Endothelial cell of umbilical vein (primary cell): ENCODE measurements at regions of chr4 and their contacts with region 1.

Region 1: DNA sequence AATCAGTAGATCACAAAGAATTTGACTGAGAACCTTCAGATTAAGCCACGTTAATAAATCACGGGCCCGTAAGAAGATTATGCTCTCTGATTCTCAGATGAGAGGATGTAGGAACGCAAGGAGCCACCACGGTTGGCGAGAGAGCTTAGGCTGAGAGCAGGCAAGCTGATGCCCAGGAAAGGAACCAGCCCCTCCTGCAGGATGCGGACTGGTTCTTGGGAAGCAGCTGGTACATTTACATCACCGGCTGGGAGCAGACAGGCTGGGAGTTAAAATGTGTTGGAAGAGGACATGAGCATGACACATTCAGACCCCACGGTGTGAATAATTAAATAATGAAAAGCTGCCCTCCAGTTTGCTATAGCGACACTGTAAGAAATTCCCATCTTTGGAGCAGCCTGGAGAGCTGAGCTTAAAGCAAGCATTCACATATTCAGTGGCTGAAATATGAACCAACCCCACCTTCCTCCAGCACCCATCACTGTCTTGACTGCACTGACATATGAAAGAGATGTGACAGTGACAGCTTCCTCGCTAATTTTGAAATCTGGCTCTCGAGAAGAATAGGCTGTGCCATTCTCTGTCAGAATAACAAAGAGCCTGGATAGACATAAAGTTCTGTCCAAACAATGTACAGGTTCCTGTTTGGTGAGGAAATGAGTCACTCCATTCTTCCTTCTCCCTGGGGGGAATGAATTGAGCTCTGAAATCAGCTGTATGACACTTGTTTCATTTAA is 33.1 kb downstream of the LNX1 start:
- DNase-seq: peak; percentile 88
- H3K4me3 ChIP-seq: peak overlapping the region in 1 of 3 experiments; percentile 44
- H3K27ac ChIP-seq: peak overlapping the region; percentile 95
- H3K4me1 ChIP-seq: peaks cover 36% of the 10 kb centered on the region
- H3K27me3 ChIP-seq: no peaks in the 10 kb centered on the region
- CTCF ChIP-seq: peak in 1 of 2 donors; percentile 4
- POLR2A ChIP-seq: peak; percentile 39

Region 2: GRCh38 chr4:52712172-52712990 is 845.9 kb before region 1 on chr4:
- CTCF ChIA-PET with region 1: no interaction called
- POLR2A ChIA-PET with region 1: no interaction called
- dilution Hi-C with region 1: no loop called
- intact Hi-C with region 1: loop called (anchors 10 kb)
- DNase-seq: peak; percentile 97
- H3K4me3 ChIP-seq: peak overlapping the region; percentile 61 to 86 (median 76)
- H3K27ac ChIP-seq: peak overlapping the region; percentile 73
- H3K4me1 ChIP-seq: peaks cover 30% of the 10 kb centered on the region
- H3K27me3 ChIP-seq: peaks cover 0 to 5% of the 10 kb centered on the region in 2 experiments
- CTCF ChIP-seq: no peak
- POLR2A ChIP-seq: peak; percentile 97

Region 3: DNA sequence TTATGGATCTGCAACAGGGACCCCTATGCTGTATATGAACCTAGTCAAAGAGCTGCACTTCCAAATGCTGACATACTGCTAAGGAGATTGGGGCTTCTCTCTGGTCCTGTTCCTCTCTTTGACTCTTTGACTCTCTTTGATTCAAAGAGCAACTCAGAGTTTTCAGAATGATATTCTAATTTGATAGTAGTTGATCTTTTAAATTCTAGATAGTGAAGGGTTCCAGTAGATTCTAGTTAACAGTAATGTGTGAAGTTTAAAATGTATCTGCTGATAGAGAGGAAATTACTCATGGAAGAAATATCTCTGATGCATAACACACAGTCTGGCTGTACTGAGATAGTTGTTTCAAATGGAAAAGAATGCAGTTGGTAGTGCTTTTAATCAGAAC is 457.0 kb before region 1 on chr4:
- CTCF ChIA-PET with region 1: no interaction called
- POLR2A ChIA-PET with region 1: no interaction called
- dilution Hi-C with region 1: no loop called
- intact Hi-C with region 1: loop called (anchors 10 kb)
- DNase-seq: peak; percentile 90
- H3K4me3 ChIP-seq: peak overlapping the region in 1 of 3 experiments; percentile 39
- H3K27ac ChIP-seq: peak overlapping the region; percentile 98
- H3K4me1 ChIP-seq: peaks cover 58% of the 10 kb centered on the region
- H3K27me3 ChIP-seq: no peaks in the 10 kb centered on the region
- CTCF ChIP-seq: no peak
- POLR2A ChIP-seq: no peak

Region 4: GRCh38 chr4:53365486-53366300 is 192.5 kb before region 1 on chr4 and contains the start of gene SCFD2:
- CTCF ChIA-PET with region 1: no interaction called
- POLR2A ChIA-PET with region 1: no interaction called
- dilution Hi-C with region 1: no loop called
- intact Hi-C with region 1: loop called (anchors 5 kb)
- DNase-seq: peak; percentile 96
- H3K4me3 ChIP-seq: peak within 1 kb of the TSS; percentile 49 to 97 (median 74)
- H3K27ac ChIP-seq: peak within 1 kb of the TSS; percentile 7
- H3K4me1 ChIP-seq: peaks cover 17% of the 10 kb centered on the region
- H3K27me3 ChIP-seq: peaks cover 14 to 19% of the 10 kb centered on the region in 2 experiments
- CTCF ChIP-seq: no peak
- POLR2A ChIP-seq: peak; percentile 67
- total RNA-seq, gene SCFD2: 17.6 and 22.8 TPM in 2 replicates

Region 5: DNA sequence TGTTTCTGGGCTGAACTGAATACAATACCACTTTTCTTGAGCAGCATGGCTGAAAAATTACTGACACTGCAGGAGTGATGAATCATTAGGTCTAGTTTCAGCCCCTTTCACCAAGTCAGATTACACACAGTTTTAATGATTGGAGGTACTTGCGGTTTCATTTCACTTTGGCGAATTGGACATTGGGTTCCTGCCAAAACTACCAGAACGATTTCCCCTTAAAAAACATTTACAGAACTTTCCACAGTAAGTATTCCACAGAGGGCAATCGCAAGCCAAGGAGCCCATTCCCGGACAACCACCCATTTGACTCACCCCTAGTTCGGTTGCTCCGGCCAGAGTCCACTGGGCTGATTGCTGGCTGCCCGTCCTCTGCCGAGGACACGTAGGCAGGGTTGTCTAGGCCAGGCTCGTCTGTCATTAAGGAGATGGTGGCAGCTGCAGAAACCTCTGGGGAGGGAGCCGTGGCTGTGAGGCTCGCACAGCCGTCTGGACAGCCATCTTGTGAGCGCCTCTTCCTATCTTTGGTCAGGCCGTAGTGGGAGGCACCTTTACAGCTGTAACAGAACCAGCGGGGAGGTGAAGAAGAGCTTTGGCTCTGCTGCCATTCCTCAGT is 50.5 kb before region 1 on chr4:
- CTCF ChIA-PET with region 1: interaction called, 16 read pairs
- POLR2A ChIA-PET with region 1: no interaction called
- dilution Hi-C with region 1: no loop called
- intact Hi-C with region 1: loop called (anchors 2 kb)
- DNase-seq: peak; percentile 77
- H3K4me3 ChIP-seq: peak overlapping the region in 1 of 3 experiments; percentile 4
- H3K27ac ChIP-seq: no peak overlapping the region
- H3K4me1 ChIP-seq: no peaks in the 10 kb centered on the region
- H3K27me3 ChIP-seq: peaks cover 10 to 13% of the 10 kb centered on the region in 2 experiments
- CTCF ChIP-seq: no peak
- POLR2A ChIP-seq: no peak

Region 6: DNA sequence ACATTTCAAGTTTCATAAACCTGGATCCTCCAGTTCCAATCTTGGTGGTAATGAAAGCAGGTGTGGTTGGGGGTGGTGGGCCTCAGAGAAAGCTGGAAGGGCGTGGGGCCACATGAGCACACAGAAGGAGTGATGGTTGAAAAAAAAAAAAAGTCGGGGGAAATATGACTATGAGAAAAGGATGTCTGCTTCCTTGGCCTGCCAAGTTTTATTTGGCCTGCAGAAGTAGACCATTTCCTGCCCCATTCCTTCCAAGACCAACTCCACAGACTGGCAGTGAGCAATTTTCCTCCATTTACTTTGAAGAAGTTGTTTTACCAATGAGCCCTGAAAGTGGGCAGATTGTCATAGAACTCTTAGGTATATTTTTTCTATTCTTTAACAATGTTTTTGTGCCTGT is 10.2 kb before region 1 on chr4:
- CTCF ChIA-PET with region 1: interaction called, 29 read pairs
- POLR2A ChIA-PET with region 1: no interaction called
- dilution Hi-C with region 1: no loop called
- intact Hi-C with region 1: loop called (anchors 2 kb)
- DNase-seq: peak; percentile 81
- H3K4me3 ChIP-seq: no peak overlapping the region
- H3K27ac ChIP-seq: no peak overlapping the region
- H3K4me1 ChIP-seq: peaks cover 22% of the 10 kb centered on the region
- H3K27me3 ChIP-seq: no peaks in the 10 kb centered on the region
- CTCF ChIP-seq: no peak
- POLR2A ChIP-seq: no peak

Region 7: GRCh38 chr4:53592686-53593501 is 34.7 kb after region 1 on chr4:
- CTCF ChIA-PET with region 1: interaction called, 7 read pairs
- POLR2A ChIA-PET with region 1: no interaction called
- dilution Hi-C with region 1: no loop called
- intact Hi-C with region 1: loop called (anchors 1 kb)
- DNase-seq: peak; percentile 46
- H3K4me3 ChIP-seq: peak overlapping the region; percentile 26 to 73 (median 29)
- H3K27ac ChIP-seq: peak overlapping the region; percentile 44
- H3K4me1 ChIP-seq: peaks cover 9% of the 10 kb centered on the region
- H3K27me3 ChIP-seq: no peaks in the 10 kb centered on the region
- CTCF ChIP-seq: no peak
- POLR2A ChIP-seq: no peak

Region 8: GRCh38 chr4:53640576-53641453 is 82.6 kb after region 1 on chr4:
- CTCF ChIA-PET with region 1: no interaction called
- POLR2A ChIA-PET with region 1: no interaction called
- dilution Hi-C with region 1: no loop called
- intact Hi-C with region 1: no loop called
- DNase-seq: no peak
- H3K4me3 ChIP-seq: no peak overlapping the region
- H3K27ac ChIP-seq: no peak overlapping the region
- H3K4me1 ChIP-seq: no peaks in the 10 kb centered on the region
- H3K27me3 ChIP-seq: peaks cover 4 to 7% of the 10 kb centered on the region in 2 experiments
- CTCF ChIP-seq: no peak
- POLR2A ChIP-seq: no peak